H1 (cell line): ENCODE measurements at regions of chr5 and their contacts with region 1.

Region 1: DNA sequence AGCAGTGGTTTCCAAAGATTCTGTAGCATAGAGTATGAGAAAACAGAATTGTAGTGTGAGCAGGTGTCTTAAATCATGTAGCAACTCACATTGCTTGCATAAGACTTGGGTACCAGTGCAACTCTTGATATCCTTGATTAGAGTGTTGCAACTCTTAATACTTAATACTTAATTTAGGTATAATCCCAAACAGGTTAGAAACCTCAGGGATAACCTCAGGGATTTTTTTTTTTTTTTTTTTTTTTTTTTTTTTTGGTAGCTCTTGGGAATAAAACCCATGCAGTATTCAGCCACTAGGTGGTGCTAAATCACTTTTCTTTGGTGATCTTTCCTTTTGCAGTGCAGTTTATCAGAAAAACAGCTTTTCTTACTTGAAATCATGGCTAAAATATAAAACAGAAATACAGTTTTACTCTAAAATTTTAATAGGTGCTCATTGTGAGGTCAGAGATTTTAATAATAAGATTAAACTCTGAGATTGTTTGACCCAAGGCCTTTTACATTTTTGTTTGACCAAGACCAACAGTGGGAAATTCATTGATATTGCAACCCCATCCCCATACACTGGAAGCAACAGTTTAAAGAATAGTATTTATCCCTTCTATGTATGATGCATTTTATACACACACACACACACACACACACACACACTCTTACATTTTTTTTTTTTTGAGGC is 55.3 kb downstream of the ERAP1 start:
- DNase-seq: no peak
- H3K4me3 ChIP-seq: no peak overlapping the region
- H3K27ac ChIP-seq: no peak overlapping the region
- H3K4me1 ChIP-seq: no peaks in the 10 kb centered on the region
- H3K27me3 ChIP-seq: no peaks in the 10 kb centered on the region
- CTCF ChIP-seq: peak in 2 of 3 experiments; percentile 29 to 36; a peak in 2 of 4 replicates
- EP300 ChIP-seq: no peak
- POLR2A ChIP-seq: no peak
- RAD21 ChIP-seq: peak; percentile 65 to 66

Region 2: DNA sequence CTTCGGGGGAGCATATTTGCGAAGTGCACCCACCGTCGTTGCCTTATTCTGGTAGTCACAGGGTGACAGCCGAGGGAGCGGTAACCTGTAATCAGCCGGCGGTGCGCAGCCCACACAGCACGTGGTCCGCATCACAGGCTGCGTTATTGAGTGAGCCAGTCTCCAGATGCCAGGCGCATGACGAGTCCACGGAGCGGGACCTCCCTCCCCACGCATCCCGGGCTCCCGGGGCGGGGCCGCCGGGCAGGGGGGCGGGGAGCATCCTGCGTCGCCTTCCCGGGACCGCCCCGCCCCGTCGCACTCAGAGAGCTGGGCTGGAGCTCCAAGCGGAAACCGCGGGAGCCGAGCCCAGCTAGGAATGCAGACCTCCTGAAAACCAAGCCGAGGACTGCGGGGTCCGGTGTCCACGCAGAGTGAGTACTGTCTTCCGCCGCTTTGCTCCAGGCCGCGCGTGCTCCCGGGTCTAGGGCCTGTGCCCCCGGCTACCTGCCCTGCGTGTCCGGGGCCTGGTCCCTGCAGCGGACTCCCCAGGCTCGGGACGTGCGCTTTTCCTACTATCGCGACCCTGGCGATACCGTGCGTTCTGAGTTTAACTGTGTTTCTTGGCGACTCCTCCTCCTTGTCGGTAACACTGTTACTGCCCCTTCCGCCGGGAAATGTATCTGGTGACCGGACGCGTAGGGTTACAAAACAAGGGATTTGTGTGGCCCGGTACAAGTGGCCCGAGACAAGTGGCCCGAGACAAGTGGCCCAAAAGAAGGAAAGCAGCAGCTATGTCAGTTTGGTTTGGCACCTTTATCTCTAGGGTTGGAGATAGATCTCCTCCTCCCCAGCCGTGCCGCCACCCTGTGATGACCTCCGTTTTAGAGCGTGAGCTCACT is 49.7 kb before region 1 on chr5:
- CTCF ChIA-PET with region 1: no interaction called
- POLR2A ChIA-PET with region 1: no interaction called
- DNase-seq: peak in 1 of 2 experiments; percentile 82
- H3K4me3 ChIP-seq: peak overlapping the region; percentile 80 to 88 (median 86)
- H3K27ac ChIP-seq: peak overlapping the region; percentile 38; the same call in 1 of the 2 replicates
- H3K4me1 ChIP-seq: peaks cover 0 to 12% (median 4%) of the 10 kb centered on the region in 4 experiments; a peak in 4 of 7 replicates
- H3K27me3 ChIP-seq: peaks cover 0 to 2% (median 0%) of the 10 kb centered on the region in 4 experiments; a peak in 3 of 7 replicates
- CTCF ChIP-seq: no peak
- EP300 ChIP-seq: no peak
- POLR2A ChIP-seq: peak in 1 of 2 experiments; percentile 41; a peak in 1 of 3 replicates
- RAD21 ChIP-seq: no peak

Region 3: GRCh38 chr5:96763026-96763425 is 10.5 kb after region 1 on chr5:
- CTCF ChIA-PET with region 1: interaction called, 12 read pairs
- POLR2A ChIA-PET with region 1: no interaction called
- DNase-seq: no peak
- H3K4me3 ChIP-seq: no peak overlapping the region
- H3K27ac ChIP-seq: no peak overlapping the region
- H3K4me1 ChIP-seq: no peaks in the 10 kb centered on the region
- H3K27me3 ChIP-seq: no peaks in the 10 kb centered on the region
- CTCF ChIP-seq: no peak
- EP300 ChIP-seq: no peak
- POLR2A ChIP-seq: no peak
- RAD21 ChIP-seq: no peak